GM12878 (cell line): ENCODE measurements at regions of chr13 and their contacts with region 1.

Region 1: DNA sequence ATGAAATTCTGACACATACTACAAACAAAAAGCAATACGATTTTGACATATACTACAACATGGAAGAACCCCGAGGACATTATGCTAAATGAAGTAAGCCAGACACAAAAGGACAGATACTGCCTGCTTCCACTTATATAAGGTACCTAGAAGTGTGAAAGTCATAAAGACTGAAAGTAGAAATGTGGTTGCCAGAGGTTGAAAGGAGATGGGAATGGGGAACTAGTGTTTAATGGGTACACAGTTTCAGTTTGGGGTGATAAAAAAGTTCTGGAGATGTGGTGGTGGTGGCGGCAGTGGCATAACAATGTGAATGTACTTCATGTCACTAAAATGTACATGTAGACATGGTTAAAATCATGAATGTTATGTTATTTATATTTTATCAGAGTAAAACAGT is 12.1 kb upstream of the NDFIP2 start:
- DNase-seq: no peak
- ATAC-seq: peak; percentile 92
- H3K4me3 ChIP-seq: no peak overlapping the region
- H3K27ac ChIP-seq: no peak overlapping the region
- H3K4me1 ChIP-seq: peaks cover 6% of the 10 kb centered on the region; the same call in 1 of the 2 replicates
- H3K27me3 ChIP-seq: no peaks in the 10 kb centered on the region
- CTCF ChIP-seq: no peak
- EP300 ChIP-seq: no peak; a peak in 1 of 4 replicates
- POLR2A ChIP-seq: no peak
- RAD21 ChIP-seq: no peak

Region 2: GRCh38 chr13:79413521-79413920 is 55.3 kb before region 1 on chr13:
- CTCF ChIA-PET with region 1: no interaction called
- POLR2A ChIA-PET with region 1: no interaction called
- RAD21 ChIA-PET with region 1: no interaction called
- SMC1A ChIA-PET with region 1: no interaction called
- in situ Hi-C with region 1: no loop called
- intact Hi-C with region 1: no loop called
- DNase-seq: no peak
- ATAC-seq: no peak
- H3K4me3 ChIP-seq: no peak overlapping the region
- H3K27ac ChIP-seq: no peak overlapping the region
- H3K4me1 ChIP-seq: no peaks in the 10 kb centered on the region
- H3K27me3 ChIP-seq: no peaks in the 10 kb centered on the region
- CTCF ChIP-seq: no peak
- EP300 ChIP-seq: no peak
- POLR2A ChIP-seq: no peak
- RAD21 ChIP-seq: no peak

Region 3: DNA sequence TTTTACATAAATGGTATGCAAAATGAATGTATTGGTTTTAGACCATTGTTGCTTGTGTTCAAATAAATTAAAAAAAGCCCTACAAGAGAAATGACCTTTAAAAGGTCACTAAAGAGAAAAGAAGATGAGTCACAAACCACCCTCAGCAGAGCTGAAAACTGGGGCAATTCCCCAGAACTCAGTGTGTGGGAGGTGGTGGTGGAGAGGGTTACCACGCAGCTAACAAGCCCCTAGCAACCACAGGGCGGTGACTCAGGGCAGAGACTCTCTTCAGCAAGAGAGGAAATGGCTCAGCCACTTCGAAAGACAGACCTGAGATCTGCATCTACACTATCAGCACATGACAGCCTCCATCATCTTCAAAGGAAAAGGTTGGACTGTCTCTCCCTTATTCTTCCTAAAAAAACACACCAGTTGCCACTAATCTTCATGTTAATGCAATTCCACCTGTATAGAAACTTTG is 17.3 kb before region 1 on chr13:
- CTCF ChIA-PET with region 1: interaction called, 8 read pairs
- POLR2A ChIA-PET with region 1: no interaction called
- RAD21 ChIA-PET with region 1: interaction called, 3 read pairs
- SMC1A ChIA-PET with region 1: interaction called, 16 read pairs
- in situ Hi-C with region 1: no loop called
- intact Hi-C with region 1: loop called (anchors 2 kb)
- DNase-seq: peak; percentile 71
- ATAC-seq: peak; percentile 100
- H3K4me3 ChIP-seq: no peak overlapping the region
- H3K27ac ChIP-seq: no peak overlapping the region
- H3K4me1 ChIP-seq: peaks cover 10% of the 10 kb centered on the region; the same call in 1 of the 2 replicates
- H3K27me3 ChIP-seq: no peaks in the 10 kb centered on the region
- CTCF ChIP-seq: no peak
- EP300 ChIP-seq: peak in 1 of 2 experiments; percentile 35; a peak in 1 of 4 replicates
- POLR2A ChIP-seq: no peak
- RAD21 ChIP-seq: no peak

Region 4: GRCh38 chr13:79457948-79458347 is 10.9 kb before region 1 on chr13:
- CTCF ChIA-PET with region 1: interaction called, 8 read pairs
- POLR2A ChIA-PET with region 1: interaction called, 8 read pairs
- RAD21 ChIA-PET with region 1: interaction called, 3 read pairs
- SMC1A ChIA-PET with region 1: interaction called, 16 read pairs
- in situ Hi-C with region 1: no loop called
- intact Hi-C with region 1: no loop called
- DNase-seq: no peak
- ATAC-seq: peak; percentile 58; the same call in 2 of the 3 replicates
- H3K4me3 ChIP-seq: no peak overlapping the region
- H3K27ac ChIP-seq: no peak overlapping the region
- H3K4me1 ChIP-seq: no peaks in the 10 kb centered on the region
- H3K27me3 ChIP-seq: no peaks in the 10 kb centered on the region
- CTCF ChIP-seq: no peak
- EP300 ChIP-seq: no peak
- POLR2A ChIP-seq: no peak
- RAD21 ChIP-seq: no peak